G401 (cell line): ENCODE measurements at regions of chr16 and their contacts with region 1.

Region 1: GRCh38 chr16:3149630-3150345 is 15.0 kb downstream of the ZNF213 start:
- DNase-seq: peak; percentile 69

Region 2: GRCh38 chr16:3027945-3028712 is 121.7 kb before region 1 on chr16:
- in situ Hi-C with region 1: no loop called
- DNase-seq: peak; percentile 91

Region 3: GRCh38 chr16:3059723-3060242 is 90.0 kb before region 1 on chr16:
- in situ Hi-C with region 1: loop called (anchors 5 kb)
- DNase-seq: no peak

Region 4: DNA sequence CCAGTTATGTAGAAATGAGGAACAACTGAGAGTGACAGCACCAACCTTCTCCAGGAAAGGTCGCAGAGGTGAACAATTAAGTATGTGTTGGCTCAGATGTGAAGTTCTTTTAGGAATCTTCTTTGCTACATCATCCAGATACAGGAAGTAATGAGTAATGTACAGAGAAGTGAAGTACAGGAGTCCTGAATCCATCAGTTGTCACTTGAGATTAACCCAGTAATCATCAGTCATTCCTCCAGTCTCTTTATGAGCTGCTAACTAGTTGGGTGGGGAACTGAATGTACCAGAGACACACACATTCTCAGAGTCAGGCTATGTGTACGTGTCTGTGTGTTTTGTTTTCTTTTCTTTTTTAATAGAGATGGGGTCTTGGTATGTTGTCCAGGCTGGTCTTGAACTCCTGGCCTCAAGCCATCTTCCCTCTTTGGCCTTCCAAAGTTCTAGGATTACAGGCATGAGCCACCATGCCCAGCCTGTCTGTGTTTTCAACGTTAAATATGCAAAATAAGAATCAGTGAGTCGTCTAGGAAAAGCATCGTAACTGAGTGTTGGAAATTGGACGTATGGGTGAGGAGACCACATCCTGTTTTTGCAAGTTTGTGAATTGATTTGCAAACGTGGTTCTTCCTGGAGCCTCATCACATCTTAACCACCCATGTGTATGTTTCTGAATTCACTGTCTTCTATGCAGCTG is 65.3 kb after region 1 on chr16:
- in situ Hi-C with region 1: no loop called
- DNase-seq: no peak

Region 5: GRCh38 chr16:3242709-3243108 is 92.9 kb after region 1 on chr16:
- in situ Hi-C with region 1: no loop called
- DNase-seq: no peak